ENCODE measurements at regions of chr5 and their contacts with region 1.

Region 1: DNA sequence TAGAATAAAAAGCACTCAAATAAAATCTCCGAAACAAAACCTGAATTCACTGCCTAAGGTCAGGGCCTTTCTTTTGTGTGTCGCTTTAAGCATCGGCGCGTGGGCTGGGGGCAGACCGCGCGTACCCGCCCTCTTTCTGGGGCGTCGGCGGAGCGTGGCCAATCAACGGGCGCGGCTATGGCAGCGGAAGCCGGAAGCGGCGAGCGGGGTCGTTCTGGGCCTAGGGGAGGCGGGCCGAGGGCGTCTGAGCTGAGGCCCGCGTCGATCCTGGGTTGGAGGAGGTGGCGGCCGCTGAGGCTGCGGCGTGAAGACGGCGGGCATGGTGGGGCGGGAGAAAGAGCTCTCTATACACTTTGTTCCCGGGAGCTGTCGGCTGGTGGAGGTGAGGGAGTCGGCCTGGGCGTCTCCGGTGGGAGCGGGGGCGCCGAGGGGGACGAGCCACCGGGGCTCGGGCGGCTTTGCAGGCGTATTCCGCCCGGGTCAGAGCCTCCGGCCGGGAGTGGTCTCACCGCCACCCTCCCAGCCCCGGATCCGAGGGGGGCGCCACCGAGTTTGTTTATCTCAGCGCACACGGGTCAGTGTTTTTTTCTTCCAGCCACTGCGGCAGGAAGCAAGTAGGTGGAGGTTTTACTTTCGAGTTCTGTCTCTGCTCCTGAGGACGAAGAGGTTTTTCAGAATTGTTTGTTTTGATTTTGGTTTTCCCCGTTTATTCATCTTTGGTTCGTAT is at the start of gene MAT2B:
- DNase-seq: peak; percentile 99
- H3K4me3 Mint-ChIP-seq: peak within 1 kb of the TSS; percentile 96
- H3K27ac Mint-ChIP-seq: peak within 1 kb of the TSS; percentile 98
- H3K4me1 Mint-ChIP-seq: peaks cover 38% of the 10 kb centered on the region
- H3K27me3 Mint-ChIP-seq: no peaks in the 10 kb centered on the region
- CTCF ChIP-seq: peak; percentile 30
- total RNA-seq, gene MAT2B: 67.5 and 70.9 TPM in 2 replicates

Region 2: GRCh38 chr5:163451489-163451888 is 54.0 kb before region 1 on chr5:
- CTCF ChIA-PET with region 1: interaction called, 4 read pairs
- POLR2A ChIA-PET with region 1: interaction called, 352 read pairs
- intact Hi-C with region 1: no loop called
- DNase-seq: no peak
- H3K4me3 Mint-ChIP-seq: no peak overlapping the region
- H3K27ac Mint-ChIP-seq: no peak overlapping the region
- H3K4me1 Mint-ChIP-seq: peaks cover 18% of the 10 kb centered on the region
- H3K27me3 Mint-ChIP-seq: no peaks in the 10 kb centered on the region
- CTCF ChIP-seq: no peak

Region 3: GRCh38 chr5:163467644-163468355 is 37.7 kb before region 1 on chr5:
- CTCF ChIA-PET with region 1: interaction called, 60 read pairs
- POLR2A ChIA-PET with region 1: interaction called, 352 read pairs
- intact Hi-C with region 1: no loop called
- DNase-seq: no peak
- H3K4me3 Mint-ChIP-seq: no peak overlapping the region
- H3K27ac Mint-ChIP-seq: peak overlapping the region; percentile 84
- H3K4me1 Mint-ChIP-seq: peaks cover 24% of the 10 kb centered on the region
- H3K27me3 Mint-ChIP-seq: no peaks in the 10 kb centered on the region
- CTCF ChIP-seq: no peak

Region 4: DNA sequence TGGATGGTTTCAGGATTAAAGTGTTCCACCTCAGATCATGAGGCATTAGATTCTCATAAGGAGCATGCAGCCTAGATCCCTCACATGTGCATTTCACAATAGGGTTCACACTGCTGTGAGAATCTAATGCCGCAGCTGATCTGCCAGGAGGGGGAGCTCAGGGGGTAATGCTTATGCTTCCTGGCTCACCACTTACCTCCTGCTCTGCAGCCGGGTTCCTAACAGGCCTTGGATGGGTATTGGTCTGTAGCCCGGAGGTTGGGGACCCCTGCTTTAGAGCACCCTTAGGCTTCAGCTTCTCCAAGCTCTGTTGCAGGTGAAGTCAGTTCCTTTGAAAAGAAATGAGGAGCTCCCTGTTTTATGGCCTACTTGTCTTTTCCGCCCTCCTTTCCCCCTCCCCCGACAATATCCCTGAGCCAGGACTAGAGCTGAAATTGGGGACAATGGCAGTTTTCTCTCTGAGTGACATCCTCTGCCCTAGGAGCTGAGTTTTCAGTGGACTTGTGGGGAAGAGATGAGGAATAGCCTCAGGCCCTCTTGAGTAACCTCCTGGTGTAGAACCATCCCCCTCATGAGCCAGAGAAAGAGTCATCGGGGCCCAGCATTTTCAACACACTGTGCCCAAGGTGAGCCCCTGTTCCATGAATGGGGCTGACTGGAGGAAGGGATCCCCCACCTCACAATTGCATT is 16.3 kb before region 1 on chr5:
- CTCF ChIA-PET with region 1: interaction called, 9 read pairs
- POLR2A ChIA-PET with region 1: interaction called, 158 read pairs
- intact Hi-C with region 1: no loop called
- DNase-seq: peak; percentile 66
- H3K4me3 Mint-ChIP-seq: no peak overlapping the region
- H3K27ac Mint-ChIP-seq: peak overlapping the region; percentile 14
- H3K4me1 Mint-ChIP-seq: peaks cover 4% of the 10 kb centered on the region
- H3K27me3 Mint-ChIP-seq: no peaks in the 10 kb centered on the region
- CTCF ChIP-seq: peak; percentile 14

Region 5: GRCh38 chr5:163649522-163649921 is 144.0 kb after region 1 on chr5:
- CTCF ChIA-PET with region 1: interaction called, 3 read pairs
- POLR2A ChIA-PET with region 1: interaction called, 14 read pairs
- intact Hi-C with region 1: no loop called
- DNase-seq: peak; percentile 99
- H3K4me3 Mint-ChIP-seq: peak overlapping the region; percentile 3
- H3K27ac Mint-ChIP-seq: peak overlapping the region; percentile 96
- H3K4me1 Mint-ChIP-seq: peaks cover 33% of the 10 kb centered on the region
- H3K27me3 Mint-ChIP-seq: no peaks in the 10 kb centered on the region
- CTCF ChIP-seq: no peak

Measured in MCF 10A (cell line).